Naive thymus-derived CD8-positive, alpha-beta T cell (primary cell): ENCODE measurements at regions of chr12 and their contacts with region 1.

Region 1: GRCh38 chr12:64222009-64222765 is at the start of gene KICS2:
- DNase-seq: peak; percentile 83 to 95 (median 91)
- ATAC-seq: peak; percentile 88 to 92
- H3K4me3 Mint-ChIP-seq: peak within 1 kb of the TSS; percentile 92 to 100 (median 98)
- H3K27ac Mint-ChIP-seq: peak within 1 kb of the TSS; percentile 97 to 100 (median 99)
- H3K4me1 Mint-ChIP-seq: peaks cover 15 to 54% (median 41%) of the 10 kb centered on the region in 4 donors
- H3K27me3 Mint-ChIP-seq: peaks cover 0 to 8% (median 3%) of the 10 kb centered on the region in 5 donors
- polyA plus RNA-seq, gene KICS2: 9.8 to 14.3 (median 10.5) TPM

Region 2: GRCh38 chr12:64171715-64172114 is 50.5 kb before region 1 on chr12:
- POLR2A ChIA-PET with region 1: no interaction called
- DNase-seq: no peak
- ATAC-seq: no peak
- H3K4me3 Mint-ChIP-seq: no peak overlapping the region
- H3K27ac Mint-ChIP-seq: no peak overlapping the region
- H3K4me1 Mint-ChIP-seq: no peaks in the 10 kb centered on the region
- H3K27me3 Mint-ChIP-seq: no peaks in the 10 kb centered on the region

Region 3: DNA sequence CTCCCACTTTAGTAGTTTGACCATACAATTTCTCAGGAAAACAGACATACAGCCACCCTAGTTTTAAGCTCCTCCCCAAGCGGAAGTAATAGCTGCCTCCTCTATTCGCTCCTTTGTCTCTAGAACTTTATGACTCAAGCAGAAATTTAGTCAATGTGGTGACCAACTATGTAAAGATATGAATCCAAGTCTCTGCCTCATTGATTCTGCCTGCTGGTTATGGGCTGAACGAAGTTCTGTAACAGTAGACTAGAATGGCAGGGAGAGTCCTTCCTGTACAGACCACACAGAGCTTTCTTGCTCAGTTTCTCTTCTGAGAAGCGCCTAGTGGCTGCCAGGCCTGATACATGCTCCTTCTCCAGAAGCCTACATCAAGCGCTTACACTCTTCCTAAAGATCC is 19.2 kb before region 1 on chr12:
- POLR2A ChIA-PET with region 1: no interaction called
- DNase-seq: no peak
- ATAC-seq: no peak
- H3K4me3 Mint-ChIP-seq: no peak overlapping the region
- H3K27ac Mint-ChIP-seq: no peak overlapping the region
- H3K4me1 Mint-ChIP-seq: peaks cover 0 to 5% (median under 1%) of the 10 kb centered on the region in 4 donors
- H3K27me3 Mint-ChIP-seq: no peaks in the 10 kb centered on the region

Region 4: GRCh38 chr12:64403707-64404469 is 181.7 kb after region 1 on chr12 and contains the start of gene XPOT:
- POLR2A ChIA-PET with region 1: interaction called, 12 read pairs
- DNase-seq: peak; percentile 83 to 94 (median 90)
- ATAC-seq: peak; percentile 94 to 96
- H3K4me3 Mint-ChIP-seq: peak within 1 kb of the TSS; percentile 92 to 99 (median 95)
- H3K27ac Mint-ChIP-seq: peak within 1 kb of the TSS; percentile 86 to 98 (median 96)
- H3K4me1 Mint-ChIP-seq: peaks cover 9 to 33% (median 25%) of the 10 kb centered on the region in 4 donors
- H3K27me3 Mint-ChIP-seq: peaks cover 0 to 3% (median 0%) of the 10 kb centered on the region in 5 donors
- polyA plus RNA-seq, gene XPOT: 23.6 to 35.8 (median 32.1) TPM

Region 5: DNA sequence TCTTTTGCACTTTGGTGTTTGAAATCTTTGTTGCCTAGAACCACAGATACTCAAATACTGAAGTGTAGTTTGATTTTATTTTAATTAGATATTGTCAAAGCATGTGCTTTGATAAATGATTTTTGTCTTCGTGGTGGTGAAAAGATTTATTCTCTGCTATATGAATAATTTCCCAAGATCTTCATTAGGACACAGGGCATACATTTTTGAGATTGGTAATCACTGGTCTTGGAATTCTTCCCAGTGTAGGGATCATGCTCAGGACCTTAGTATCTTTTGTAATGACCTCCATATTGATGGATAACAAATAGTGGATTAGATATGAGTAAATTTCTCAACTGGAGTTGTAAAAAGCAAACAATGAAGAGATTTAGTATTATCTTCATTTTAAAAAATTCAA is 258.0 kb after region 1 on chr12:
- POLR2A ChIA-PET with region 1: no interaction called
- DNase-seq: no peak
- ATAC-seq: no peak
- H3K4me3 Mint-ChIP-seq: no peak overlapping the region
- H3K27ac Mint-ChIP-seq: no peak overlapping the region
- H3K4me1 Mint-ChIP-seq: peaks cover 0 to 5% (median 2%) of the 10 kb centered on the region in 4 donors
- H3K27me3 Mint-ChIP-seq: no peaks in the 10 kb centered on the region

Region 6: GRCh38 chr12:64714551-64714968 is 492.4 kb after region 1 on chr12:
- POLR2A ChIA-PET with region 1: no interaction called
- DNase-seq: peak in 1 of 10 donors; percentile 19
- ATAC-seq: peak in 1 of 2 donors; percentile 58
- H3K4me3 Mint-ChIP-seq: peak overlapping the region in 1 of 10 donors; percentile 12
- H3K27ac Mint-ChIP-seq: peak overlapping the region in 6 of 10 donors; percentile 0 to 82 (median 48)
- H3K4me1 Mint-ChIP-seq: peaks cover 7 to 40% (median 32%) of the 10 kb centered on the region in 4 donors
- H3K27me3 Mint-ChIP-seq: no peaks in the 10 kb centered on the region